ENCODE measurements at regions of chr6 and their contacts with region 1.

Region 1: DNA sequence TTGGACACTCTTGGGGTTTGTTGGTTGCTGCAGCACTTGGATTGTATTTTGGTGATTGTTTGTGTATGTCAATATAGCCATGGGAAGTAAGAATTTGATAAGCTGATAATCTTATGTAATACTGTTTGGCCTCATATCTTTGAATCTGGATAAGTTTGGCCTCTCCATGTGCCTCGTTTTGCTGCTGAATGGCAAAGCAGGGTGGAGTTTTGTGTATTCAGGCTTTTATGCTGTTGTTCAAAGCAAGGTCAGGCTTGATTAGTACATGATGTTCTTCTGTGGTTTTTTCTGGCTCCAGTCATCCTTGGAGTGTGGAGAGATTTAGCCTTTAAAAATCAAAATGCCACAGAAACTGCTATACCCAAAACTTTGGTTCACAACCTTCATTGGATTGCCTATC is 728.9 kb upstream of the GJE1 start:
- DNase-seq: no peak

Region 2: GRCh38 chr6:140774080-140774505 is 629.7 kb before region 1 on chr6:
- intact Hi-C with region 1: loop called (anchors 10 kb)
- DNase-seq: no peak

Region 3: GRCh38 chr6:141169419-141169818 is 234.4 kb before region 1 on chr6:
- intact Hi-C with region 1: loop called (anchors 10 kb)
- DNase-seq: no peak

Measured in cardiac septum (tissue), 1 donor.